IMR-90 (cell line): ENCODE measurements at regions of chr17 and their contacts with region 1.

Region 1: GRCh38 chr17:66673668-66674315 is 161.1 kb upstream of the CACNG5 start:
- DNase-seq: peak; percentile 72
- ATAC-seq: peak; percentile 94
- H3K4me3 ChIP-seq: no peak overlapping the region
- H3K27ac ChIP-seq: no peak overlapping the region
- H3K4me1 ChIP-seq: peaks cover 4% of the 10 kb centered on the region
- H3K27me3 ChIP-seq: no peaks in the 10 kb centered on the region
- CTCF ChIP-seq: peak; percentile 82
- POLR2A ChIP-seq: no peak
- RAD21 ChIP-seq: peak; percentile 92

Region 2: DNA sequence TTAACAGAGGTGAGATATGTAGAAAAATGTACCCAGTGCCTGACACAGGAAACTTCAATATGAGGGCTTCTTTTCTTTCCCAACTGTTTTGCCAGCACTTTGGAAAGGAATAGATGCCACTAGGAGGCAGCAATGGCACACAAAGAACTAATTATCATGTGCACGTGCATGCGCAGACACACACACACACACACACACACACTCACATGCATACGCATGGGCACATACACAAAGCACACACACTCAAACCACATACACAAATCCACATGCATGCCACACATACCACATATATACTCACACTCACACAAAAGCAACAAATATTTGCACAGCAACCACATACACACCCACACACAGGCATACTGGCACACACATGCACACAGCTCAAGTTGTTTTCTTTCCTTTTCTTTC is 473.1 kb before region 1 on chr17:
- CTCF ChIA-PET with region 1: interaction called, 3 read pairs
- POLR2A ChIA-PET with region 1: no interaction called
- dilution Hi-C with region 1: no loop called
- in situ Hi-C with region 1: no loop called
- intact Hi-C with region 1: loop called (anchors 1 kb)
- DNase-seq: peak; percentile 83
- ATAC-seq: peak; percentile 77
- H3K4me3 ChIP-seq: no peak overlapping the region
- H3K27ac ChIP-seq: no peak overlapping the region
- H3K4me1 ChIP-seq: no peaks in the 10 kb centered on the region
- H3K27me3 ChIP-seq: no peaks in the 10 kb centered on the region
- CTCF ChIP-seq: peak; percentile 80
- POLR2A ChIP-seq: no peak
- RAD21 ChIP-seq: peak; percentile 85

Region 3: GRCh38 chr17:66567234-66568170 is 106.3 kb before region 1 on chr17:
- CTCF ChIA-PET with region 1: no interaction called
- POLR2A ChIA-PET with region 1: no interaction called
- dilution Hi-C with region 1: no loop called
- in situ Hi-C with region 1: no loop called
- intact Hi-C with region 1: loop called (anchors 2 kb)
- DNase-seq: peak; percentile 88
- ATAC-seq: peak; percentile 86
- H3K4me3 ChIP-seq: no peak overlapping the region
- H3K27ac ChIP-seq: peak overlapping the region; percentile 93
- H3K4me1 ChIP-seq: peaks cover 22% of the 10 kb centered on the region
- H3K27me3 ChIP-seq: no peaks in the 10 kb centered on the region
- CTCF ChIP-seq: peak; percentile 89
- POLR2A ChIP-seq: no peak
- RAD21 ChIP-seq: peak; percentile 92